ENCODE measurements at regions of chr6 and their contacts with region 1.

Region 1: DNA sequence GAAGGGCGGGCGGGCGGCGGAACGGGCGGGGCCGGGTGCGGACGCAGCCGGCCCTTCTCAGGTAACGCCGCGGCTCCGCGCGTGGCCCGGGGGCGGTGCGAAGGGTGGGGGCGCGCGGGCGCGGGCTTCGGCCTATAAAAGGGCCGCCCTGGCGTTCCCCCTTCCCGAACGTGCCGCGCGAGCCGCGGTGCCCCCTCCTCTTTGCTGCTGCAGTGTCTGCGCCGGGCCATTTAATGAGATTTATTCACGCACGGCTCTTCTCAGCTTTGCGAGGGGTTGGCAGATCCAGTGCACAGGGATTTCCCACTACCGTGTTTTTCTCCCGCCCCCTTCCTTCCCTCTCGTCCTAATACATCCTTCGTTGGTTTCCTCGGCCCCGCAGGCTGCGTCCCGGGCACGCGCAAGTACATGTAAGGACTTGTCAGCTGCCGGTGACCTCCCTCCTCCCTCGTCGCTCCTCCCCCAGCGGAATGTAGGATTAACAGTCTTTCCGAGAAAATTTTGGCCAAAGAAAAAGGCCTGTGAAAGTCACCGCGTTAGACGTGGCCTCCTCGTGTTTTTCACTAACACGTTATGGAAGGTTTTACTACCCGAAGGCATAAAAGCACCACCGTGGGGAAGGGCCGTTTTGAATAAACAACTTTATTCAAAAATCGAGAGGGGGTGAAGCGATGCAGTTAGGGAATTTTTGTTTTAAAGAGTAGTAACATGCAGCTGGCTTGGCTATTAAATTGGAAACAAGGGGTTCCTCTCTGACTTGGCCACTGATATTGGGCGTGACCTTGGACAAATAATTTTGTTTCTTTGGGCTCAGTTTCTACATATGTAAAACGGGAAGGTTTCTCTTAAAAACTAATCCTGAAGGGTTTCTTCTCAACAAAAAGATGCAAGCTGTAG is 966 bp upstream of the REV3L start:
- DNase-seq: no peak
- H3K4me3 Mint-ChIP-seq: peak overlapping the region; percentile 91
- H3K27ac Mint-ChIP-seq: peak overlapping the region; percentile 96
- H3K4me1 Mint-ChIP-seq: peaks cover 50% of the 10 kb centered on the region
- H3K27me3 Mint-ChIP-seq: no peaks in the 10 kb centered on the region

Region 2: DNA sequence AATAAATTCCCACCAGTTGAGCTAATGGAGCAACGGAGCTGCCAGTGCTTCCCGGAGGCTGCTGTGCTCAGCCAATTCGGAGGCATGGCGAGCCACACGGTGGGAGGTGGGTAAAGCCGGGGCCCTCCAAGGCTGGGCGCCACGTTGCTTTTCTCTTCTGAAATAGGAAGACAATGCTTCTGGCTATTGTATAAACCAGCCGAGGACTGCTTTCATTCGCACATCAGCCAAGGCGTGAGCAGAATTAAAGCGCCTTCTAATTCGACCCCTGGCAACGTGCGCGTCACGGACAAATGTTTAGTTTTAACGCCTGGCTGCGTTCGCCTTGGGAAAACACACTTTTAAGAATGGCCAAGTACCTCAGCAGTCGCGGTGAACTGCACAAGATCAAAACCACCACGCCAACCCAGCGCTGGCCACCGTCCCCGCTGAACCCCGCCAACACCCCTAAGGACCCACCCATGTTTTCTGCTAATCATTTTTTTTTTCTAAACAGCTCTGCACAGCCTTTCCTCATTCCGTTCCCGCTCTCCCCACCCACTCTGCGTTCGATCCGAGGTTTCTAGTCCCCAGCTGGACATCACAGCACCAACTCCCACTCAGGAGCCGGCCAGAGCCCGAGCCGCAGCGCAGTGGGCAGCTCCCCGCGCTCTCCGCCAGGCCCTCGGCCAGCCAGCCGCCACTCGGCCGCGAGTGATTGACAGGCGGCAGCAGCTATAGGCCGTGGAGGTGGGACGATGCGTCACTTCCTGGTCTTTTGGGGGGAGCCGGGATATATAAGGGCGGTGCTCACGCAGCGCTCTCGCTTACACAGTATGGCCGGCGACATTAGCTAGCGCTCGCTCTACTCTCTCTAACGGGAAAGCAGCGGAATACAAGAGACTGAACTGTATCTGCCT is 609.8 kb before region 1 on chr6 and contains the start of gene AMD1:
- intact Hi-C with region 1: loop called (anchors 10 kb)
- DNase-seq: peak; percentile 94
- H3K4me3 Mint-ChIP-seq: peak within 1 kb of the TSS; percentile 95
- H3K27ac Mint-ChIP-seq: peak within 1 kb of the TSS; percentile 98
- H3K4me1 Mint-ChIP-seq: peaks cover 26% of the 10 kb centered on the region
- H3K27me3 Mint-ChIP-seq: no peaks in the 10 kb centered on the region
- total RNA-seq, gene AMD1: 111 TPM in 2 replicates

Region 3: GRCh38 chr6:111382476-111383300 is 101.3 kb before region 1 on chr6:
- intact Hi-C with region 1: no loop called
- DNase-seq: no peak
- H3K4me3 Mint-ChIP-seq: no peak overlapping the region
- H3K27ac Mint-ChIP-seq: no peak overlapping the region
- H3K4me1 Mint-ChIP-seq: peaks cover 20% of the 10 kb centered on the region
- H3K27me3 Mint-ChIP-seq: no peaks in the 10 kb centered on the region

Region 4: GRCh38 chr6:111517965-111518364 is 34.0 kb after region 1 on chr6:
- intact Hi-C with region 1: no loop called
- DNase-seq: no peak
- H3K4me3 Mint-ChIP-seq: no peak overlapping the region
- H3K27ac Mint-ChIP-seq: no peak overlapping the region
- H3K4me1 Mint-ChIP-seq: peaks cover 17% of the 10 kb centered on the region
- H3K27me3 Mint-ChIP-seq: no peaks in the 10 kb centered on the region

Region 5: GRCh38 chr6:111533087-111533784 is 49.3 kb after region 1 on chr6:
- intact Hi-C with region 1: loop called (anchors 1 kb)
- DNase-seq: peak; percentile 43
- H3K4me3 Mint-ChIP-seq: peak overlapping the region; percentile 30
- H3K27ac Mint-ChIP-seq: peak overlapping the region; percentile 50
- H3K4me1 Mint-ChIP-seq: peaks cover 35% of the 10 kb centered on the region
- H3K27me3 Mint-ChIP-seq: no peaks in the 10 kb centered on the region

Region 6: GRCh38 chr6:111549746-111550145 is 65.8 kb after region 1 on chr6:
- intact Hi-C with region 1: no loop called
- DNase-seq: no peak
- H3K4me3 Mint-ChIP-seq: no peak overlapping the region
- H3K27ac Mint-ChIP-seq: no peak overlapping the region
- H3K4me1 Mint-ChIP-seq: peaks cover 14% of the 10 kb centered on the region
- H3K27me3 Mint-ChIP-seq: no peaks in the 10 kb centered on the region

Region 7: GRCh38 chr6:111565326-111566221 is 81.6 kb after region 1 on chr6:
- intact Hi-C with region 1: loop called (anchors 1 kb)
- DNase-seq: no peak
- H3K4me3 Mint-ChIP-seq: no peak overlapping the region
- H3K27ac Mint-ChIP-seq: peak overlapping the region; percentile 53
- H3K4me1 Mint-ChIP-seq: peaks cover 70% of the 10 kb centered on the region
- H3K27me3 Mint-ChIP-seq: no peaks in the 10 kb centered on the region

Region 8: GRCh38 chr6:111605100-111605751 is 121.2 kb after region 1 on chr6:
- intact Hi-C with region 1: loop called (anchors 1 kb)
- DNase-seq: peak; percentile 15
- H3K4me3 Mint-ChIP-seq: peak overlapping the region; percentile 90
- H3K27ac Mint-ChIP-seq: peak overlapping the region; percentile 98
- H3K4me1 Mint-ChIP-seq: peaks cover 49% of the 10 kb centered on the region
- H3K27me3 Mint-ChIP-seq: no peaks in the 10 kb centered on the region

Region 9: DNA sequence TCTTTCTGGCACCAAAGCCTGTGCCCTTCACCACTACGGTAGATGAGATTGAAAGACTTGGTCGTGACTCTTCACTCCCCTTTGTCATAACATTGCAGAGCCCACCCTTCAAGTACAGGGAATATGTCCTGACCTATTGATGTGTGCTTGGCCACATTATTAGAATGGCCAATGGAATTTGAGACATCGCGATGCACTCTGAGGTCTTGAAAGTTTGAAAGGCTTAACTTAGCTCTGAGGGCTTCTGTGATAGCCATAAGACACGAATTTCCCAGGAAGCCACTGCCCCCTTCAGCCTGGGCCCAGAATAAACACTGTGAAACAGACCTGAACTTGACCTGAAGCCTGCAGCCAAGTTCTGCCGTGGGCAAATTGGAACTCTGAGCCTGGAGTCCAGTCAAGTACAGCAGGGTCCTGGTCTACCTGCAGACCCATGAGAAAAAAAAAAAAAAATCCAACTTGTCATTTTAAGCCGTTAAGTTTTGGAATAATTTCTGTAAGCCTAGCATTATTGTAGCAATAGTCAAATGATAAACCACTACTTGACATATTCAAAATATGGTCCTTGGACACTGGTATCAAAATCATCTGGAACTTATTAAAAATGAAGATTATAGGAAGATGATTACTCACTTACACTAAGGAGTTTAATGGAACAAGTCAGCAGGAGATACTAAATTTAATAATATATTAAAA is 158.6 kb after region 1 on chr6:
- intact Hi-C with region 1: loop called (anchors 5 kb)
- DNase-seq: peak; percentile 29
- H3K4me3 Mint-ChIP-seq: no peak overlapping the region
- H3K27ac Mint-ChIP-seq: no peak overlapping the region
- H3K4me1 Mint-ChIP-seq: peaks cover 4% of the 10 kb centered on the region
- H3K27me3 Mint-ChIP-seq: peaks cover under 1% of the 10 kb centered on the region

Region 10: DNA sequence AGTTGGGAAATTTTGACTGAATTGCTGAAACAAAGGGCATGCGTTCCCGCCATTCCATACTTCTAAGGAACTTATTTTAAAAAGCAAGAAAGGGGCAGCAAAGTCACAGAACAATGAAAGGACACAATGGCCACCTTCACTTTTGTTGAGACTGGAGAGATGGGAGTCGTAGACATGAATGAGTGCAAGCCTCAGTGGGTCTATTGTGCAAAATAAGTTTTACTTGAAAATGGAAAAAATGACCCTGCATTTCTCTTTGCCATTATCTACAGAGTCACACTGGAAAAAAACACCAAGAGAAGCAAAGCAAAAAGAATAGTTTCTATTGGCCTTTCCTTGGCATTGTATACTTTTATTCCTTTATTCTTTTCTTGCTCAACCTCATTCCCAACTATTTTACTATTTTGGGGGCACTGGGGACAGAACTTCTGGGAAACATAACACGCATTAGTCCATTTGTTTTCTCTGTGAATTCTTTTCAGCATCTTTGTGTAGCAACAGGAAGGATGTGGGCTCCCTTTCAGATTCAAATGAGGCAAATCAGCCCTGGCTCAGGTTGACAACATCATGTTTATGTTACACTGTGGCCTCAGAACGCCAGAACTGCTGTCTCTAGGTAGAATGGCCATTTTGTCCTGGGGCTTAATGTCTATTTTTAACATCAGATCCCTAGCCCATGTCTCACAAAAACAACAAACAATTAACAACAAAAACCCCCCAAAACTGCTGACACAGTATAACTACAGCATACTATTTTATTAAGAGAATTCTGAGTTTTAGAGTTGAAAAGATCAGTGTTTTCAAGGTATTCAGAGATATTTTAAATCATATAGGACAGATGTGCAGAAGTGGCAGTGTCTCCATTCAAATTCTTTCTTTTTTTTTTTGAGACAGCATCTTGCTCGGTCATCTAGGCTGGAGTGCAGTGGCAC is 267.0 kb after region 1 on chr6:
- intact Hi-C with region 1: no loop called
- DNase-seq: peak; percentile 53
- H3K4me3 Mint-ChIP-seq: peak overlapping the region; percentile 50
- H3K27ac Mint-ChIP-seq: peak overlapping the region; percentile 96
- H3K4me1 Mint-ChIP-seq: peaks cover 80% of the 10 kb centered on the region
- H3K27me3 Mint-ChIP-seq: no peaks in the 10 kb centered on the region

Region 11: DNA sequence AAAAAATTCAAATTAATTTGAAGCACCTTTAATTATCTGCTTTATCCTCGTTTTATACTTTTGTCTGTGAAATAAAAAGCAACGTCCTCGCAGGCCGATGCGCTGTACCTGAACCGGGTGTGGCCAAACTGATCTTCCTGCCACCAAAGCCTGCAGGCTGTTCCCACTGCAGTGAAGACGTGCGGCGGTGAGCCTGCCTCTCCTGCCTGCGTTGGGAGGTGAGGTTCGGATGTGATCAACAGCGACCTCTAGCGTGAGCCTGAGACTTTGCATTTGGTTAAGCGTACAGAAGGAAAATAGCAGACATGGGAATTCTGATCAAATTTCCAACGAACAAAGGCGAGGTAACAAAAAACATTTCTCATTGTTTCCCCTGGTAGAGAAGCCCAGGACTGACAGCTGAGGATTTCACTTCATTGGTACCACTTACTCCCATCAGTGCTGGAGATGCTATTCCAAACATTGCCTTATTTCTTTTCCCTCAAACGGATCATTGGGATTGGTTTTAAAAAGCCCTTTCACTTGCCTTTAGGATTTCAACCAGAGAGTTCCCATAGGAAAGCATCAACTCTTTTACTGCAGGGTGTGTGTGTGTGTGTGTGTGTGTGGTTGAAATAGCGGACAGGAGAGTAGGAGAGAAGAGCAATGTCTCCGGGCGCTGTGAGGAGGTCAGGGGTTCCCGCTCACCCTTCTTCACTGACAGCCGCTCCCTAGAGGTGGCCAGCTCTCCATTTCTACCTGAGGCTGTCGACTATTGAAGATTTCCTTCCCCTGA is 513.3 kb after region 1 on chr6:
- intact Hi-C with region 1: loop called (anchors 10 kb)
- DNase-seq: peak; percentile 69
- H3K4me3 Mint-ChIP-seq: no peak overlapping the region
- H3K27ac Mint-ChIP-seq: no peak overlapping the region
- H3K4me1 Mint-ChIP-seq: peaks cover 37% of the 10 kb centered on the region
- H3K27me3 Mint-ChIP-seq: no peaks in the 10 kb centered on the region